ENCODE measurements at regions of chr9 and their contacts with region 1.

Region 1: DNA sequence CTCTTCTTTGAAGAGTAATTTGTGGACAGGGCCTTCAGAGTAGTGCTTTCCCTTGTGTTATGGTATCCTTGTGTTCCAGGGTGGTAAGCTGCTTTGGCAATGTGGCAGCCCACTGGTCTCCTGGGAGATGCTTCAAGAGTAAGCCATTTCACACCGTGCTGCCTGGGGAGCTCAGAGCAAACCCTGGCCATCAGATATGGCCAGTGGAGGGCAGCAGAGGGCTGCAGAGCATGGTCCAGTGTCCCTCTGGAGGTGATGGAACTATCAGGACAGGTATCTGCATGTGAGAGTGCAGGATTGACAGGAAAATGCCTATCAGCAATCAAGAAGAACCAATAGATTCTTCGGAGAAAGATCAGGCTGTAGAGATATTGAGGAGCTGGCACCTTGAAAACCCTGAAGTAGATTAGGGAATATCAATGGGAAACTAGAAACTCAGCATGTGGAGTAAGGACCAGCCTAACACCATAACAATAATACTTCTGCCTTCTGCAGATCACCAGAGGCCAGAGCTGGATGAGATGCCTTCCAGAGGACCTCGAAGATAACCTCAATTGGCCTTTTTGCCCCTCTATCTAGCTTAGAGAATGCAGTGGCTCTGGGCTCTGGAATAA is 90.8 kb downstream of the PLPPR1 start:
- DNase-seq: peak; percentile 85
- ATAC-seq: peak; percentile 96
- H3K4me3 Mint-ChIP-seq: no peak overlapping the region
- H3K27ac Mint-ChIP-seq: no peak overlapping the region
- H3K4me1 Mint-ChIP-seq: peaks cover 20% of the 10 kb centered on the region
- H3K27me3 Mint-ChIP-seq: peaks cover 2% of the 10 kb centered on the region; the same call in 1 of the 2 replicates
- CTCF ChIP-seq: peak; percentile 85

Region 2: DNA sequence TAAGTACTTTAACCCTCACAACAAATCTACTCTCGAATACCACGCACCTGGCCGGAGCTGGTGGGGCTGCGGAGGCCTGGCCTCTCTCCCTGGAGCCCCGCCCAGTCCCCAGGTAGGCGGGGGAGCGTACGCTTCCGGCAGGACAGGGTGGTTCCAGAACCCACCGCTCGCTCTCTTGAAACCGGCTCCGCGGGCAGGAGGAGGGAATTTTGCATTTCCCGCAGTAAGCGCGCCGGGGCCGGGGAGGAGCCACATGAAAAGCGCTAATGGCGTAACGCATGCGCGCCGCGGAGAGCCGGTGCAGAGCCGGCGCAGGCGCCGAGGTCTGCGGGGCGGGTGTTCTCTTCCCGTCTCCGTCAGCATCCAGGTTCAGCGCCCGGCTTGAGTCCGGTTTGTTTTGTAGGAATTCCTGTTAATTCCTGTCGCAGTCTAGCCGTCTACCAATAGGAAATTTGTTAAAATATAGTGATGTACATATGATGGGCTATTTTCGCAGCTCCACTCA is 520.6 kb before region 1 on chr9:
- CTCF ChIA-PET with region 1: interaction called, 13 read pairs
- POLR2A ChIA-PET with region 1: no interaction called
- DNase-seq: peak; percentile 97
- ATAC-seq: peak; percentile 92
- H3K4me3 Mint-ChIP-seq: peak overlapping the region; percentile 64
- H3K27ac Mint-ChIP-seq: peak overlapping the region; percentile 93
- H3K4me1 Mint-ChIP-seq: peaks cover 51% of the 10 kb centered on the region
- H3K27me3 Mint-ChIP-seq: no peaks in the 10 kb centered on the region; the same call in 1 of the 2 replicates
- CTCF ChIP-seq: no peak

Region 3: GRCh38 chr9:100856238-100856637 is 263.1 kb before region 1 on chr9:
- CTCF ChIA-PET with region 1: no interaction called
- POLR2A ChIA-PET with region 1: no interaction called
- DNase-seq: no peak
- ATAC-seq: no peak
- H3K4me3 Mint-ChIP-seq: no peak overlapping the region
- H3K27ac Mint-ChIP-seq: no peak overlapping the region
- H3K4me1 Mint-ChIP-seq: no peaks in the 10 kb centered on the region
- H3K27me3 Mint-ChIP-seq: no peaks in the 10 kb centered on the region
- CTCF ChIP-seq: no peak

Region 4: GRCh38 chr9:101093620-101094019 is 25.7 kb before region 1 on chr9:
- CTCF ChIA-PET with region 1: interaction called, 10 read pairs
- POLR2A ChIA-PET with region 1: no interaction called
- DNase-seq: no peak
- ATAC-seq: no peak
- H3K4me3 Mint-ChIP-seq: no peak overlapping the region
- H3K27ac Mint-ChIP-seq: no peak overlapping the region
- H3K4me1 Mint-ChIP-seq: peaks cover 31% of the 10 kb centered on the region
- H3K27me3 Mint-ChIP-seq: peaks cover 3% of the 10 kb centered on the region; the same call in 1 of the 2 replicates
- CTCF ChIP-seq: no peak

Region 5: DNA sequence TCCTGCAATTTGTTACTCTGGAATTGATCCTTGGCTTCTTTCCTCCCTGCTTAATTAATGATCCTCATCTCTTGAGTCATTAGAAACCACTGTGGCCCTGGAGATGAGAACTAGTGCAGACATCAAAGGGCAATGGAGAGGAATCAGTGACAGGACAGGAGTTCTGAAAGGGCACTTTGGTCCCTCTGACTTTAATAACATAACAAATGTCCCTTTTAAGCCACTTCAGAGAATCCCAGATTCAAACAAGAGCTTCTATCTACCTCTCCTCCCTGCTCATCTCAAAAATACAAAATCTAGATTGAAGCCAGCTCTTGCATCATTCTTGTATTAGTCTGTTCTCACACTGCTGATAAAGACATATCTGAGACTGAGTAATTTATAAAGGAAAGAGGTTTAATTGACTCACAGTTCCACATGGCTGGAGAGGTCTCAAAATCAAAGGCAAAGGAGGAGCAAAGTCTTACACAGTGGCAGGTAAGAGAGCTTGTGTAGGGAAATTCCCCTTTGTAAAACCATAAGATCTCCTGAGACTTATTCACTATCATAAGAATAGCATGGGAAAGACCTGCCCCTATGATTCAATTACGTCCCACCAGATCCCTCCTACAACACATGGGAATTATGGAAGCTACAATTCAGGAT is 48.3 kb after region 1 on chr9:
- CTCF ChIA-PET with region 1: interaction called, 14 read pairs
- POLR2A ChIA-PET with region 1: no interaction called
- DNase-seq: no peak
- ATAC-seq: no peak
- H3K4me3 Mint-ChIP-seq: no peak overlapping the region
- H3K27ac Mint-ChIP-seq: no peak overlapping the region
- H3K4me1 Mint-ChIP-seq: peaks cover 16% of the 10 kb centered on the region
- H3K27me3 Mint-ChIP-seq: no peaks in the 10 kb centered on the region
- CTCF ChIP-seq: no peak

Region 6: DNA sequence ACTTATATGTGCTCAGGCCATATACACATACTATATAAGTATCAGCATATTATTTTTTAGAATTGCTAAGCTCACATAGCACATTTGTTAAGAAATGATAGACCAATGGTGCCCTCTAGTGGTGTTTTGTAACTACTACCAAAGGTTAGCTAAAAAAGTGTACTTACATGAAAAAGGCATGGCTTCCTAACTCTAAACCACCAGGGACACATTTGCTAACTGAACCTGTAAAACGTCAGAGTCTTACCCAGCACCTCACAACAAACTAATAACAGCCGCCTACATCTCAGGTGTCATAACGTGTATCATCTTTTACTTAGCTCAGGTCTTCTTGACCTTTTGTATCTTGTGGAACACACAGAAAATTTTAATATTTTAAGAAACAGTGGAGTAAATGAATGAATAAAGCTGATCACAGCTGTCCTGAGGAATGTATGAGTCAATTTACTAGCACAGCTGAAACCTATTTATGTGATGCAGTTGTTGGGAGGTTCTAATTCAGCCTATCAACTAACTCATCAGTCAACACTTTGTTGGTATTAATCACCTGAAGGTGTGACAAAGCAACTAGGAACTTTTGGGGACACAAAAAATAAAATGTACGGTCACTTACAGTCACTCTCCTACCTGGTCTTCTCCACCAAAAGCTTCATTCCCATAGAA is 192.6 kb after region 1 on chr9:
- CTCF ChIA-PET with region 1: interaction called, 47 read pairs
- POLR2A ChIA-PET with region 1: no interaction called
- DNase-seq: no peak
- ATAC-seq: peak; percentile 78
- H3K4me3 Mint-ChIP-seq: no peak overlapping the region
- H3K27ac Mint-ChIP-seq: no peak overlapping the region
- H3K4me1 Mint-ChIP-seq: peaks cover 2% of the 10 kb centered on the region; the same call in 1 of the 2 replicates
- H3K27me3 Mint-ChIP-seq: no peaks in the 10 kb centered on the region; the same call in 1 of the 2 replicates
- CTCF ChIP-seq: peak; percentile 76

Measured in WTC11 (cell line).